ENCODE measurements at regions of chr12 and their contacts with region 1.

Region 1: DNA sequence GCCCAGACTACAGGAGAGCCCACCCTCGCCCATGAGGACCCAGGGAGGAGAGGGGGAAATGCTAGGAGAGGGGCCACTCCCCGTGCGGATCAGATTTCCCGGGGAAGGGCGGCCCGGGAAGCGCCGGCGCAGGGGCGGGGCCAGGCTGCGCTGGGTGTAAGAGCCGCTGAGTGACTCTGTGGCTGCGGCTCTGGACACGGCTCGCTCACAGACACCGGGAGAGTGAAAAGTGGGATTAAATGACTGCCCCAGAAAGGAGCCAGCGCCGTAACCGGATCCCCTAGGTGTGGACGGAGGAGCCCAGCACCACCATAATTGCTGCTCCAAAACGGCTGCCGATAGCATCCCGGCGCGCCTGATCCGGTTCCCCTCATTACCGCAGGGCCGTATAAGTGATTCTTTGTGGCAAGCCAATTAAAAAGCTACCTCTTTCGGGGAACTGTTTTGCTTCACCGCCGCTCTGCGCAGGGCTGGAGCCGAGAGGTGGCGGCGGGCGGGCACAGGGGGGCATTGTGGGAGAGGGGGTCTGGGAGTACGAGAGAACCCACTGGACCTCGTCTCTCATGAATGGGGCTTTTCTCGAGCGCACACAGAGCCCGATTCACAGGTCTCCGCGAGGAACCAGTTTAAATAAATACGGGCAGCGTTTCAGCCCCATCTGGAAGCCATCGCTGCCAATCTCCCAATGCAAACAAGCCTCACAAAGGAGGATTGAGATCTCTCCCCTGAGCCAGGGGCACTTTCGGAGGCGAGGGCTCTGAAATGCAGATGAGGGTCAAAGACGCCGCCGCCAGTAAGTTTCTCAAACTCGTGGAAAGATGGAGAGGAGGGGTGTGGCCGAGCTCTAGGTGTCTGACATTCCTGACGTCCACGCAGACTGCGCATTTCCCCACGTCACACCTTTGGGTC is 2.5 kb downstream of the COL2A1 start:
- DNase-seq: peak in 1 of 2 donors; percentile 74
- H3K4me3 ChIP-seq: peak overlapping the region; percentile 68 to 73
- H3K27ac ChIP-seq: peak overlapping the region in 1 of 2 donors; percentile 45
- H3K4me1 ChIP-seq: peaks cover 14 to 32% of the 10 kb centered on the region in 2 donors
- H3K27me3 ChIP-seq: peaks cover 12% of the 10 kb centered on the region
- CTCF ChIP-seq: no peak

Region 2: GRCh38 chr12:47758834-47759690 is 242.7 kb before region 1 on chr12 and contains the start of gene RAPGEF3:
- intact Hi-C with region 1: no loop called
- DNase-seq: peak; percentile 62 to 94
- H3K4me3 ChIP-seq: peak within 1 kb of the TSS; percentile 80 to 81
- H3K27ac ChIP-seq: peak within 1 kb of the TSS; percentile 87 to 94
- H3K4me1 ChIP-seq: peaks cover 18 to 38% of the 10 kb centered on the region in 2 donors
- H3K27me3 ChIP-seq: no peaks in the 10 kb centered on the region
- CTCF ChIP-seq: peak; percentile 32 to 39 (median 33)
- total RNA-seq, gene RAPGEF3: 165 TPM

Region 3: DNA sequence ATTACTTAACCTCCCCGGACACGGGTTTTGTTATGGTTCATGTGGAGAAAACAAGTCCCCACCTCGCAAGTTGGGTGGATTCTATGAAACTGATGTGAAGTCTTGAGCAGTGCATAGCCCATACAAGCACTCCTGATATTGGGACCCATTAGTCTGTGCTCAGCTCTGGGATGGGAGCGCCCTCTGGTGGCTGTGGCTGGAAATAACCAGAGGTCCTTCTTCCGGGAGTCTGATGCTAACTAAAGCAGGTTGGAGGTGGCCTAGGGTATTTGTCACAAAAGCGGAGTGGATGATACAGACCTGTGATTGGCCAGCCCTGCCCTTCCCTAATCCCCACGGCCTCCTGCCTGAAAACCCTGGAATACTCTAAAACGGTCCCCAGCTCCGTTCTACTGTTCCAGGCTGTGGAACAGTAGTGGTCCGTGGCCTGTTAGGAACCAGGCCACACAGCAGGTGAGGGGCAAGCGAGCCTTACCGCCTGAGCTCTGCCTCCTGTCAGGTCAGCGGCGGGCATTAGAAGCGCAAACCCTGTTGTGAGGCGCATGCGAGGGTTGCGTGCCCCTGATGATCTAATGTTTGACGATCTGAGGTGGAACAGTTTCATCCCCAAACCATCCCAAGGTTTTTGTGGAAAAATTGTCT is 222.3 kb before region 1 on chr12:
- intact Hi-C with region 1: no loop called
- DNase-seq: peak; percentile 63 to 96
- H3K4me3 ChIP-seq: no peak overlapping the region
- H3K27ac ChIP-seq: peak overlapping the region; percentile 53 to 88
- H3K4me1 ChIP-seq: peaks cover 37 to 51% of the 10 kb centered on the region in 2 donors
- H3K27me3 ChIP-seq: no peaks in the 10 kb centered on the region
- CTCF ChIP-seq: peak; percentile 87 to 95 (median 92)

Region 4: DNA sequence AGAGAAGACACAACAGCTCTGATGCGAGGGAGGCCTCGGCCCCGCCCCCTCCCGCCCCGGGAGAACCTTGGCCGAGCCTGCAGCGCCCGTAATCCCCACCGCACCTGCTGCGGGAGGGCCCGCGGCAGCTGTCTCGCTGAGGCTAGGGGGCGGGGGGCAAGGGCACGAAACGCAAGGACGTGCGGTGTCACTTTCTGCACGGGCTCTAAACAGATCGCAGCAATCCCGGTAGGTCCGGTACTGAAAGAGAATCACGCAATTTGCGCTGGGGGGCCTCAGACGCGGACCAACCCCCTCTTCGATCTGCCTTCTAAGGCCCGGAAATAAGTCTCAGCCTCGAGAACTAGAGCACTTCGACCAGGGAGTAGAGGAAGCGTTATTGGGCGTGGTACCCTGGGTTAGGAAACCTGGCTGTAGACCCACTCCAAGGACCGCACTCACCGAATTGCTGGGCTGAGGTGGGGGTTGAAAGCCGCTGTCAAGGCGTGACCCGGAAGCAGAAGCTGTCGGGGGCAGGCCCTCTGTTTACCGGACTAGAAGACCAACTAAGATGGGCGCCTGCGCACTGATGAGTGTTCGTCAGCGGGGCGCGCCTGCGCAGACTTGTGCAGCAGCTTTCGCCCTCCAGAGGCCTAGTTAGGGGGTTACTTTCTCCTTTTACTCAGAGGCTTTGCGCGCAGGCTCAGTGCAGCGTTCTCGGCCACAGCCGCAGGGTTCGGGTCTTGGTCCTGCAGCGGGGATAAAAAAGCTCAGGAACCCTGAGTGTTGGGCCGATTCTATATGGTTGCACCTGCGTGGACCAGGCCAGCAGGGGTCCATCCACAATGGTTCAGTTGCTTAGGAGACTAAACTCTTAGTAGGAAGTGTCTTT is 155.5 kb after region 1 on chr12 and contains the start of gene ASB8:
- intact Hi-C with region 1: loop called (anchors 10 kb)
- DNase-seq: peak; percentile 94 to 100
- H3K4me3 ChIP-seq: peak within 1 kb of the TSS; percentile 75 to 88
- H3K27ac ChIP-seq: peak within 1 kb of the TSS; percentile 76 to 78
- H3K4me1 ChIP-seq: peaks cover 0 to 8% of the 10 kb centered on the region in 2 donors
- H3K27me3 ChIP-seq: no peaks in the 10 kb centered on the region
- CTCF ChIP-seq: peak; percentile 57 to 63 (median 60)
- total RNA-seq, gene ASB8: 23.7 TPM

Measured in ascending aorta (tissue), 2 donors.